GM12878 (cell line): ENCODE measurements at regions of chr12 and their contacts with region 1.

Region 1: GRCh38 chr12:57693659-57694458 is at the start of gene OS9:
- DNase-seq: peak; percentile 100
- ATAC-seq: peak; percentile 99
- H3K4me3 ChIP-seq: peak within 1 kb of the TSS; percentile 100
- H3K27ac ChIP-seq: peak within 1 kb of the TSS; percentile 88
- H3K4me1 ChIP-seq: peaks cover 3% of the 10 kb centered on the region; the same call in 1 of the 2 replicates
- H3K27me3 ChIP-seq: no peaks in the 10 kb centered on the region
- CTCF ChIP-seq: peak; percentile 74 to 85 (median 75)
- EP300 ChIP-seq: no peak
- POLR2A ChIP-seq: peak; percentile 100
- RAD21 ChIP-seq: peak; percentile 46
- polyA plus RNA-seq, gene OS9: 5.2 to 8.4 TPM

Region 2: DNA sequence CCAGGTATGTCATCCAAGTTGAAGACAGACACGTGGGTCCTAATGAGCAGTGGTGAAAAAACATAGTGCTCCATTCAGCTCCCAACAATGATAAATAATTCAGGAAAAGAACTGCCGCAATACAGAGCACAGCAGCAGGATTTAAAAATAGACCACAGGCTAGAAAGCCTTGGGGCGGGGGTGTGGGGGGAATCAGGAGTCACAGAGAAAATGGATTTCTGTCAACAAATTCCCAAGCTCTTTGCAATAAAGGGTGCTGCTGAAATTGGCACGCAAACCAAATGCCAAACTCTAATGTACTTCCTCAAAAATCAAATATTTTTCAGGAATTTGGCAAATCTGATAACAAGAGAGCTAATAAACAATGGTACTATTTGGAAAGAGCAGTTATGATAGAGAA is 321.6 kb before region 1 on chr12:
- CTCF ChIA-PET with region 1: no interaction called
- POLR2A ChIA-PET with region 1: no interaction called
- RAD21 ChIA-PET with region 1: no interaction called
- SMC1A ChIA-PET with region 1: no interaction called
- in situ Hi-C with region 1: no loop called
- intact Hi-C with region 1: no loop called
- DNase-seq: no peak
- ATAC-seq: no peak
- H3K4me3 ChIP-seq: no peak overlapping the region
- H3K27ac ChIP-seq: no peak overlapping the region
- H3K4me1 ChIP-seq: no peaks in the 10 kb centered on the region; the same call in 1 of the 2 replicates
- H3K27me3 ChIP-seq: no peaks in the 10 kb centered on the region
- CTCF ChIP-seq: no peak
- EP300 ChIP-seq: no peak
- POLR2A ChIP-seq: no peak
- RAD21 ChIP-seq: no peak

Region 3: GRCh38 chr12:57590536-57591479 is 103.1 kb before region 1 on chr12 and contains the start of gene PIP4K2C:
- CTCF ChIA-PET with region 1: interaction called, 8 read pairs
- POLR2A ChIA-PET with region 1: no interaction called
- RAD21 ChIA-PET with region 1: no interaction called
- SMC1A ChIA-PET with region 1: no interaction called
- in situ Hi-C with region 1: no loop called
- intact Hi-C with region 1: loop called (anchors 5 kb)
- DNase-seq: peak; percentile 44
- ATAC-seq: peak; percentile 99
- H3K4me3 ChIP-seq: peak within 1 kb of the TSS; percentile 98
- H3K27ac ChIP-seq: peak within 1 kb of the TSS; percentile 51
- H3K4me1 ChIP-seq: peaks cover 4% of the 10 kb centered on the region; the same call in 1 of the 2 replicates
- H3K27me3 ChIP-seq: no peaks in the 10 kb centered on the region
- CTCF ChIP-seq: no peak
- EP300 ChIP-seq: no peak
- POLR2A ChIP-seq: peak; percentile 93
- RAD21 ChIP-seq: no peak
- polyA plus RNA-seq, gene PIP4K2C: 4.8 to 6.0 TPM

Region 4: DNA sequence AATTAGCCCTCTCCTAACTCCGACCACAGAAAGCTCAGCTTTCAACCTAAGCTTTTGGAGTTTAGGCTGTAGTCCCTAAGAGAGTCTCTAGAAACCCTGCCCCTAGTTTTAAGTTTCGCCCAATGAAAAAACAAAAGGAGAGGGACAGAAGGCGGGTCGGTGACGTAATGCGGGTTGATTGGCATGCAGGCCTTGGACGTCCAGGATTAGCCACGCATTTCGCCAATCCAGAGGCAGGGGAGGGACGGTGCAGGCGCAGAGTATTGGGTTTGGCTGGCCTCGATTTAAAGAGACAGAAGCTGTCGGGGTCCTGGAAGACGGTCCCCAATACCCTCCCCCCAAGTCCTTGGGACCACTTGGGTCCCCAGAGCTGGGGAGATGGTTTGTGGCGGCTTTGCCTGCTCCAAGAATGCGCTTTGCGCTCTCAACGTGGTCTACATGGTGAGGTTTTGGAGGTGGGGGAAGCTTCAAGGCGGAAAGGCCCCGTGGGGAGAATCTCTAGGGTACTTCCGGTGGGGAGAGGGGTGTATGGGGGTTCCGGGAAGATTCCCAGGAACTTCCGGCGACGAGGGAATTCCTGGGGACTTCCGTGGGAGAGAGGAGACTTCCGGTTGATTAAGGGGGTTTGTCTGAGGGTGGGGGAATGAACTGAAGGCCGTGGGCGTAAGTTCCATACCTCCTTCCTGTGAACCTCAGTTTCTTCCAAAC is 51.1 kb after region 1 on chr12 and contains the start of gene TSPAN31:
- CTCF ChIA-PET with region 1: interaction called, 7 read pairs
- POLR2A ChIA-PET with region 1: no interaction called
- RAD21 ChIA-PET with region 1: interaction called, 7 read pairs
- SMC1A ChIA-PET with region 1: interaction called, 3 read pairs
- in situ Hi-C with region 1: no loop called
- intact Hi-C with region 1: loop called (anchors 2 kb)
- DNase-seq: peak; percentile 92
- ATAC-seq: peak; percentile 87
- H3K4me3 ChIP-seq: peak within 1 kb of the TSS; percentile 91
- H3K27ac ChIP-seq: peak within 1 kb of the TSS; percentile 94
- H3K4me1 ChIP-seq: peaks cover 22% of the 10 kb centered on the region
- H3K27me3 ChIP-seq: no peaks in the 10 kb centered on the region
- CTCF ChIP-seq: no peak
- EP300 ChIP-seq: no peak
- POLR2A ChIP-seq: peak; percentile 72
- RAD21 ChIP-seq: no peak
- polyA plus RNA-seq, gene TSPAN31: 23.4 to 25.1 TPM